ENCODE measurements at regions of chr19 and their contacts with region 1.

Region 1: DNA sequence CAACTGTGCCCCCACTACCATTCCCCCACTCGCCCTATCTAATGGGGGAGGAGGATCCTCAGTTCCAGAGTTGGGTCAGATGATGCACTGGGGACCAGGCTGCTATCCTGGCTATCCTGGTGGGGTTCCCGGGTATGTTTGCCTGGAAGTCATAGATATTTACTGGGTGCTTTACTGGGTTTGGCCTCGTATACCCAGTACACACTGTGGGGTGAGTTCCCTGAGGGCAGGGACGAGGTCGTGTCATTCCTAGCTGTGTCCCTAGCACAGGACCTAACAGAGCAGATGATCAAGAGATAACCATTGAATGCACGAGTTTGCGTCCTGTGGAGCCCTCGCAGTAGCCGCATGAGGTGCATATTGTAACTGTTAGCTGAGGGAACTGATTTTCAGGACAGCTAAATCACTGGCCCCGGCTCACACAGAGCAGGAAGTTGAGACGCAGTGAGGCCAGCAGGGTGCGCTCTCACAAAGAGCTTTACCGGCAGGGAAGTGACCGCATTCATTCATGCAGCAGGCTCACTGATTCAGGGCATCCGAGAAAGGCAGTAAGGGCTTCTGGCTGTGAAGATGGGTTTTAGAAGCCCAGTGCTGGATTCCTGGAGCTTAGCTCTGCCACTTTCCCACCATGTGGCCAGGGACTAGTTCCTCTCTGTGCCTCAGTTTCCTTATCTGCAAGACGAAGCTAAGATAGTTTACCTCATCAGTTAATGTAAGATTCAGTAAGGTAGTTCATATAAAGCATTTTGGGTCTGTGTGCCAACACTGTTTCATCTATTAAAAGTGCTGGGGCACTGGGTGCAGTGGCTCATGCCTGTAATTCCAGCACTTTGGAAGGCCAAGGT is 6.0 kb downstream of the RUVBL2 start:
- DNase-seq: no peak
- H3K27ac ChIP-seq: peak overlapping the region; percentile 42
- CTCF ChIP-seq: peak; percentile 65

Region 2: DNA sequence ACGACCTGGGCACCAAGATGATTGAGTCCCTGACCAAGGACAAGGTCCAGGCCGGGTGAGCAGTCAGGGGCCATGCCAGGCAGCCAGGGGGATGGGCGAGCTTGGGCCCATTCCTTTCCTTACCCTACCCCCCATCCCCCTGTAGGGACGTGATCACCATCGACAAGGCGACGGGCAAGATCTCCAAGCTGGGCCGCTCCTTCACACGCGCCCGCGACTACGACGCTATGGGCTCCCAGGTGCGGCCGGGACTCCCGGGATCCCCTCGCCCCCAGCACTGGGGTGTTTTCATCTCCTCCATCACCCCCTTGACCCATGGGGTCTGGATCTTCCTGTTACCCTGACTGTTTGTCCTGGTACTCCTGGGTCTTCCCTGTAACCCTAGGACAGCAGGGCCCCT is 10.1 kb after region 1 on chr19:
- CTCF ChIA-PET with region 1: interaction called, 10 read pairs
- POLR2A ChIA-PET with region 1: no interaction called
- DNase-seq: no peak
- H3K27ac ChIP-seq: no peak overlapping the region
- CTCF ChIP-seq: no peak

Measured in RWPE1 (cell line).